ENCODE measurements at regions of chr4 and their contacts with region 1.

Region 1: GRCh38 chr4:40056716-40057585 is at the start of gene N4BP2:
- DNase-seq: peak; percentile 86
- ATAC-seq: peak; percentile 51
- H3K4me3 Mint-ChIP-seq: peak within 1 kb of the TSS; percentile 95
- H3K27ac Mint-ChIP-seq: peak within 1 kb of the TSS; percentile 96
- H3K4me1 Mint-ChIP-seq: peaks cover 26% of the 10 kb centered on the region
- H3K27me3 Mint-ChIP-seq: peaks cover 5% of the 10 kb centered on the region
- total RNA-seq, gene N4BP2: 31.9 to 33.5 TPM

Region 2: DNA sequence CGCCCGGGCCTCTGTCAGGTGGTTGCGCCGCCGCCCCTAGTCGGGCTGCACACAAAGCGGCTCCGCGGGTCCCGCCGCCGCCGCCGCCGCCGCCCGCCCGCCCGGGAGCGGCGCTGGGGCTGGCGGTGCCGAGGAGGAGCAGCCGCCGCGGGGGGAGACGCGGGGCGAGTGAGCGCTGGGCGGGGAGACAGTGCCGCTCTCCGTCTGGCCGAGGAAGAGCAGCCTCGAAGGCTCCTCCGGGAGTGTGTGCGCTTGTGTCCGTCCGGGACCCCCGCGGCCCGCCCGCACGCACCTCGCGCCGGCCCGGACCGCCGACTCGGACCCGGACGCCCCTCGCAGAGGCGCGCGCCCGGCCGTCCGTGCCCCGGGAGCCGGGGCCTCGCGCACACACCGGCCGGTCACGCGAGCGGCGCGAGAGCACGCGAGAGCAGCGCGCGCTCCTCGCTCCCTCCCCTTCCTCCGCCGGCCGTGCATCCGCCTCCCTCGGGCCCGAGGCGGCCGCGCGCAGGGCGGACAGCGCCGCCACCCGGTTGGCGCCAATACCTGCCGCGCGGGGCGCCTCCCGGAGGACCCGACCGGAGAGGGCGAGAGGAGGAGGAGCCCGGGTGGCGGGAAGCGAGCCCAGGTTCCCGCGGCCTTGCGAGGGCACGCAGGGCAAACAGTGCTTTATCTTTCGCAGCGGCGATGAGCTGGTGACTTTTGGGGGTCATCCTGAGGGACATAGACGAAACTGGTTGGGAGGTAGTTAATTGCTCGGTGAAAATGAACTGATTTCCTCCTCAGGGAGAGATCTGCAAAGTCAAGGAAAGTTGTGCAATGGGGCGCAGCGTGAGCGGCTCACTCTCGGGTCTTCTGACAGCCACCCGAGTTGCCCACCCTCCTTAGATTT is 79.2 kb before region 1 on chr4 and contains the start of gene PDS5A:
- POLR2A ChIA-PET with region 1: interaction called, 14 read pairs
- DNase-seq: peak; percentile 97
- ATAC-seq: peak; percentile 87
- H3K4me3 Mint-ChIP-seq: peak within 1 kb of the TSS; percentile 99
- H3K27ac Mint-ChIP-seq: peak within 1 kb of the TSS; percentile 97
- H3K4me1 Mint-ChIP-seq: peaks cover 29% of the 10 kb centered on the region
- H3K27me3 Mint-ChIP-seq: no peaks in the 10 kb centered on the region
- total RNA-seq, gene PDS5A: 96.7 to 99.9 TPM

Region 3: DNA sequence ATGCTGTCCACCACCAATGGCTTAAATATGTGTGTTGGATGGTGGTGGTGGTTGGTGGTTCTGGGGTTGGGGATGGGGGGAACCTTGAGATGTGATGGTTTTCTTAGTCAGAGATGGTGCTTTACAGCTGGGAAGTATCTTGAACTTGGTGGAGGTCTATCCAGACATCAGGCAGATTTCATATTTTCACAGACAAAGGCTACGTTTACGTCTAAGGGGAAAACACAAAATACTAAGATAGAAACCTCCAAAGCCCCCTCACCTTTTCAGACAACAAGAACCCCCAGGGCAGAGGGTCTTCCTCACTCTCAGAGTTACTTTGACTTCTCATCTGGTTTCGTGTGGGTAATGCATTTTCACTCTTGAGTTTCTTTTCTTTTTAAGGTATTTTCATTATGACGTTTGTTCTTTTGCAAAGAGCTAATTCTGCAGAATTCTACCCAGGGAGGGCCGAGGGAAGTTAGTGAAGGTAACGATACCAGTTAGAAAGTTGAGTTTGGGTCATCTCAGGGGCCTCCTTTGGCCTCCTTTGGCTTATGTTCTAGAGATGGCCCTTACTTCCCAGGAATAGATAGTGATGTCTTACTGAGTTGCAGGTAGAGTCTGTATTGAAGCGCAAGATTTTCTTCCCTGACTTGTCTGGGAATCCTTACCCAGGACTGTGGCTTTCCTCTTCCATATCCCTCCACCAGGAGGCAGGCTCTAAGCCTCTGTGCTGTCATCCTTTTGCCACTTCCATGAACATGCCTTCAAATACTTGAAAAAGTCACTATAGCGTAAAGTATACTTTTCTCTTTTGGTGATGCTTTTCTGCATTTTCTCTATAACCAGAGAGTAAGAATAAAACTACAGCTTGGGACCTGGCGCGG is 171.8 kb after region 1 on chr4:
- POLR2A ChIA-PET with region 1: interaction called, 12 read pairs
- DNase-seq: peak; percentile 21
- ATAC-seq: no peak
- H3K4me3 Mint-ChIP-seq: peak overlapping the region; percentile 82
- H3K27ac Mint-ChIP-seq: peak overlapping the region; percentile 94
- H3K4me1 Mint-ChIP-seq: peaks cover 86% of the 10 kb centered on the region
- H3K27me3 Mint-ChIP-seq: no peaks in the 10 kb centered on the region

Region 4: DNA sequence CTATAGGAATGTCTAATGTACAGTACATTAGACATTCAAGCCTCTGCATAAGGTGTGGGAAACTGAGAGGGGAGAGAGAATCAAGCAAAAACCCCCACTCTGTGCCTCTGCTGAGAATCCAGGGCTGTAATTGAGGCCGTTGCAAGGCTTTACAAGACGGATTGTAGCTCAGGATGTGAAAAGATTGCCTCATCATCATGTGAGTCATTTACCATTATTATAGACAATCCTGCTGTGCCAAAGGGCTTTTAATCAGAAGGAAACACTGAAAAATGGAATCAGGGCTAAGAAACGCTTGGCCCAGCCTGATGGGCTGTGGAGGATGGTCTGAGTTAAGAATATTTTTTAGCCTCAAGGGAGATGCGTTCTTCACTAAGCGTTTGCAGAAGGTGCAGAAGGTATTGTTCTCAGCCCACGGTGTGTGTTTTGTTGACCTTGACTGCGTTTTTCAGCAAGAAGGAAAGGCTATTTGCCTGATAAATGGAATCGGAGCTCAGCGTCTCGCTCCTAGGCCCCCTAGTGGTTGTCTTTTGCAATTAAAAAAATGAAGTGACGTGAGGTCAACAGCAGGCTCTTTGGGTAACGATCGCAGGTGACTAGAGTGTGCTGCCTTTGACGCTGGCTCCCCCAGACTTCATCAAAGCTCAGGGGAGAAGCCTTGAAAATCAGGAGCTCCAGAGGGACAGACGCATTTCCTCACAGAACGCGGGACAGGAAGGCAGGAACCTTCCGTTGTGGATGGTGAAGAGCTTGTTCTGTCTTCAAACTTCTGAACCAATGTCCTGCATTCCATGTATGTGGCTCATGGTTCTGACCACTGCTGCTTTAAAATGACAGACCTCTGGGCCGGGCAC is 260.1 kb after region 1 on chr4:
- POLR2A ChIA-PET with region 1: interaction called, 22 read pairs
- DNase-seq: peak; percentile 60
- ATAC-seq: peak; percentile 82
- H3K4me3 Mint-ChIP-seq: peak overlapping the region; percentile 91
- H3K27ac Mint-ChIP-seq: peak overlapping the region; percentile 96
- H3K4me1 Mint-ChIP-seq: peaks cover 41% of the 10 kb centered on the region
- H3K27me3 Mint-ChIP-seq: no peaks in the 10 kb centered on the region

Region 5: GRCh38 chr4:40731792-40732245 is 674.9 kb after region 1 on chr4:
- POLR2A ChIA-PET with region 1: interaction called, 10 read pairs
- DNase-seq: no peak
- ATAC-seq: peak; percentile 80
- H3K4me3 Mint-ChIP-seq: peak overlapping the region; percentile 41
- H3K27ac Mint-ChIP-seq: peak overlapping the region; percentile 77
- H3K4me1 Mint-ChIP-seq: peaks cover 31% of the 10 kb centered on the region
- H3K27me3 Mint-ChIP-seq: peaks cover 7% of the 10 kb centered on the region